Activated CD8-positive, alpha-beta T cell treated with anti-CD3 and anti-CD28 coated beads, Interleukin-2, amount 10 ng/mL, durations not matched to agents 7 days and 5 days (primary cell): ENCODE measurements at regions of chr20 and their contacts with region 1.

Region 1: DNA sequence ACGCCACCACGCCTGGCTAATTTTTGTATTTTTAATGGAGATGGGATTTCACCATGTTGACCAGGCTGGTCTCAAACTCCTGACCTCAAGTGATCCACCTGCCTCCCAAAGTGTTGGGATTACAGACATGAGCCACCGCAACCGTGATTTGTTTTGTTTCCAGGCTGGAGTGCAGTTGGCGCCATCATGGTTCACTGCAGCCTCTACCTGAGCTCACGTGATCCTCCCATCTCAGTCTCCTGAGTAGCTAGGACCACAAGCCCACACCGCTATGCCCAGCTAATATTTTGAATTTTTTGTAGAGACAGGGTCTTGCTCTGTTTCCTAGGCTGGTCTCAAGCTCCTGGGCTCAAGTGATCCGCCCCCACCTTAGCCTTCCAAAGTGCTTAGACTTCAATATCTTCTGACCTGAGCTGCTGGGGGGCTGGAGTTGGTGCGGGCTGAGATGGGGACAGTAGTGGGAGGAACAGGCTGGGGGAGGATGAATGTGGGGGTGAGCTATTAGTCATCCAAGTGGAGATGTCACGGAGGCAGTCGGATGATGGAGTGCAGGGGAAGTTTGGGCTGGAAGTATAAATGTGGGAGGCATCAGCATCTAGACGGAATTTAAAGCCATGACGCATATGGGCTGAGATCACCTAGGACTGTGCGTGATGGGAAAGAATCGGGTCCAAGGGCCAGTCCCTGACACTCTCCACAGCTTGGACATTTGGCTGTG is 23.1 kb upstream of the ZMYND8 start:
- DNase-seq: no peak
- ATAC-seq: no peak
- H3K4me3 Mint-ChIP-seq: no peak overlapping the region
- H3K27ac Mint-ChIP-seq: peak overlapping the region; percentile 78
- H3K4me1 Mint-ChIP-seq: peaks cover 34% of the 10 kb centered on the region
- H3K27me3 Mint-ChIP-seq: no peaks in the 10 kb centered on the region

Region 2: GRCh38 chr20:47156301-47157148 is 223.1 kb before region 1 on chr20:
- CTCF ChIA-PET with region 1: no interaction called
- POLR2A ChIA-PET with region 1: no interaction called
- DNase-seq: no peak
- ATAC-seq: no peak
- H3K4me3 Mint-ChIP-seq: no peak overlapping the region
- H3K27ac Mint-ChIP-seq: no peak overlapping the region
- H3K4me1 Mint-ChIP-seq: no peaks in the 10 kb centered on the region
- H3K27me3 Mint-ChIP-seq: peaks cover 8% of the 10 kb centered on the region

Region 3: DNA sequence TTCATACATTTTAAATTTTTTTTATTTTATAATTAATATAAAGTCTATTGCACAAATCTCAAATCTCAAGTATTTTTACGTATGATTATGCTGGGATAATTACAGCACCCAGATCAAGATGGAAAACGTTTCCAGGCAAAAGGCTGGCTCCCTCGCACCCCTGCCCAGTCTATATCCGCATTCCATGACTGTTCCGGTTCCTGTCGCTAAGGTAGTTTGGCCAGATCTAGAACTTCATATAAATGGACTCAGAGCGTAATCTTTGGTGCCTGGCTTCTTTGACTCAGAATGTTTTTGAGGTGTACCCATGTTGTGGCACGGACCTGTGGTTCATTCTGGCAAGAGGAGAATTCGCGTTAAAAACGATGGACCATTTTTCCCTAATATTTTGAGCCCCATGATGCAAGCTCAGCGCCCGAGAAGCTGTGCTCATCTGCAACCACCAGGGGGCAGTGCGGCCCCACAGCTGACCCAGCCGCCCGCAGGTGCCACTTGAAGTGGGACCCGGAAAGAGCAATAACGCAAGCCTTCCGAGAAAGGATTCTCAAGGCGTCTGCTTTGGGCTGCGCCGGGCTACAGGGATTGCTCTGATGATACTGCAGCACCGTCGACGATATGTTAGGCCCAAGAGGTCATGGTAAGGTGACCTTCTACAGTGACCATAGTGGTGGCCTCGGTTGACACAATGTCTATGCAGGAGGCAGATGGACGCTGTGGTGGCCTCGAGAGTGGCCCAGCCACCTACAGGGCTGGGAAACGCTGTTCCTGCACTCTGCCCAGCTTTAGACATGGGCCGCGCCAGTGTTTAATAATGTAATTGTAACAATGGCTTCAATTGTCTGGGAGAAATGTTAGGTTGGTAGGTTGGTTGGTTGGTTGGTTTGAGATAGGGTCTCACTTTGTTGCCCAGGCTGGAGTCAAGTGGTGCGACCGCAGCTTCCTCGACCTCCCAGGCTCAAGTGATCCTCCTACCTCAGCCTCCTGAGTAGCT is 183.2 kb before region 1 on chr20:
- CTCF ChIA-PET with region 1: interaction called, 146 read pairs
- POLR2A ChIA-PET with region 1: no interaction called
- DNase-seq: peak; percentile 85
- ATAC-seq: peak; percentile 84
- H3K4me3 Mint-ChIP-seq: no peak overlapping the region
- H3K27ac Mint-ChIP-seq: peak overlapping the region; percentile 20
- H3K4me1 Mint-ChIP-seq: peaks cover 13% of the 10 kb centered on the region
- H3K27me3 Mint-ChIP-seq: peaks cover 5% of the 10 kb centered on the region

Region 4: DNA sequence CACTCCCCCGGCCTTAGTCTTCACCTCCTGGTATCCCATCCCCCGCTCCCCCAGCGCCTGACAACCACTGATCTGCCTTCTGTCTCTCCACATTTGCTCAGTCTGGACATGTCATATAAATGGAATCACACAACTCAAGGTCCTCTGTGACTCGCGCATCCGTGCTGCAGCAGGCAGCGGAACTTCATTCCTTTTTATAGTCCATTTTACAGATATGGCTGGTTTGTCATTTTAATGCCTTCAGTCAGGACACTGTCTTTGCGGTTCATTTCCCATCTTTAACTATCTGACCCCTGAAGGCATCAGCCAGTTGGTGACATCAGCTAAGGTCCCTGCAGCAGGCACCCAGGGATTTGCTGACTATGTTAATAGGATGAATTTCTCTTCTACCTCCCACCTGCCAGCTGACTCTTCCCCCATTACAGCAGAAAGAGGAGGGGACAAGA is 148.8 kb before region 1 on chr20:
- CTCF ChIA-PET with region 1: interaction called, 16 read pairs
- POLR2A ChIA-PET with region 1: no interaction called
- DNase-seq: no peak
- ATAC-seq: no peak
- H3K4me3 Mint-ChIP-seq: no peak overlapping the region
- H3K27ac Mint-ChIP-seq: no peak overlapping the region
- H3K4me1 Mint-ChIP-seq: no peaks in the 10 kb centered on the region
- H3K27me3 Mint-ChIP-seq: no peaks in the 10 kb centered on the region

Region 5: DNA sequence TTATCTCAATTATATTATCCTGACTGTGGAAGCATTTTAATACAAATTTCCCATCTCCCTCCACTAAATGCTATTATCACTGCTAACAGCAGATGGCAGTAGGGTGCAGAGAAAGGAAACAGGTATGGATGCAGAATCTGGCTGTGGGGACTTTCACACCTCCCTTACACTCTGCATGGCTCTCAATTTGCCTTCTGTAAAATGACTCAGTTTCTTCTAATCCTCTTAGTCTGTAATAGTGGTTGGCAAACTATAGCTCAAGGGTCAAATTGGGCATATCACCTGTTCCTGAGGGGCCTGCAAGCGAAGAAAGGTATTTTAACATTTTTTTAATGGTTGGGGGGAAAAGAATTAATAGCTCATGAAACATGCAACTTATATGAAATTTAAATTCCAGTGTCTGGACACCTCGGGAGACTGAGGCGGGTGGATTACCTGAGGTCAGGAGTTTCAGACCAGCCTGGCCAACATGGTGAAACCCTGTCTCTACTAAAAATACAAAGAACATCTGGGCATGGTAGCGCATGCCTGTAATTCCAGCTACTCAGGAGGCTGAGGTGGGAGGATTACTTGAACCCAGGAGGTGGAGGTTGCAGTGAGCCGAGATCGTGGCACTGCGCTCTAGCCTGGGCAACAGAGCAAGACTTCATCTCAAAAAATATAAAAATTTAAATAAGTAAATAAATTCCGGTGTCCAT is 106.5 kb before region 1 on chr20:
- CTCF ChIA-PET with region 1: interaction called, 558 read pairs
- POLR2A ChIA-PET with region 1: interaction called, 6 read pairs
- DNase-seq: peak; percentile 68
- ATAC-seq: peak; percentile 59
- H3K4me3 Mint-ChIP-seq: no peak overlapping the region
- H3K27ac Mint-ChIP-seq: no peak overlapping the region
- H3K4me1 Mint-ChIP-seq: peaks cover 39% of the 10 kb centered on the region
- H3K27me3 Mint-ChIP-seq: no peaks in the 10 kb centered on the region

Region 6: GRCh38 chr20:47356526-47357295 is 22.9 kb before region 1 on chr20 and contains the start of gene ZMYND8:
- CTCF ChIA-PET with region 1: interaction called, 206 read pairs
- POLR2A ChIA-PET with region 1: interaction called, 21 read pairs
- DNase-seq: peak; percentile 96
- ATAC-seq: peak; percentile 83
- H3K4me3 Mint-ChIP-seq: peak within 1 kb of the TSS; percentile 84
- H3K27ac Mint-ChIP-seq: peak within 1 kb of the TSS; percentile 97
- H3K4me1 Mint-ChIP-seq: peaks cover 48% of the 10 kb centered on the region
- H3K27me3 Mint-ChIP-seq: no peaks in the 10 kb centered on the region
- total RNA-seq, gene ZMYND8: 44.3 to 44.7 TPM

Region 7: GRCh38 chr20:47412083-47412482 is 32.5 kb after region 1 on chr20:
- CTCF ChIA-PET with region 1: interaction called, 22 read pairs
- POLR2A ChIA-PET with region 1: no interaction called
- DNase-seq: no peak
- ATAC-seq: no peak
- H3K4me3 Mint-ChIP-seq: no peak overlapping the region
- H3K27ac Mint-ChIP-seq: no peak overlapping the region
- H3K4me1 Mint-ChIP-seq: peaks cover 41% of the 10 kb centered on the region
- H3K27me3 Mint-ChIP-seq: no peaks in the 10 kb centered on the region

Region 8: GRCh38 chr20:47501483-47502270 is 122.1 kb after region 1 on chr20 and contains the start of gene NCOA3:
- CTCF ChIA-PET with region 1: interaction called, 24 read pairs
- POLR2A ChIA-PET with region 1: no interaction called
- DNase-seq: peak; percentile 95
- ATAC-seq: peak; percentile 86
- H3K4me3 Mint-ChIP-seq: peak within 1 kb of the TSS; percentile 96
- H3K27ac Mint-ChIP-seq: peak within 1 kb of the TSS; percentile 96
- H3K4me1 Mint-ChIP-seq: peaks cover 44% of the 10 kb centered on the region
- H3K27me3 Mint-ChIP-seq: no peaks in the 10 kb centered on the region
- total RNA-seq, gene NCOA3: 57.4 to 60.1 TPM